ENCODE measurements at regions of chr13 and their contacts with region 1.

Region 1: GRCh38 chr13:53151336-53152056 is 122.9 kb downstream of the OLFM4 start:
- DNase-seq: peak; percentile 60
- H3K4me3 ChIP-seq: no peak overlapping the region
- H3K27ac ChIP-seq: no peak overlapping the region
- H3K4me1 ChIP-seq: no peaks in the 10 kb centered on the region
- H3K27me3 ChIP-seq: no peaks in the 10 kb centered on the region
- CTCF ChIP-seq: peak; percentile 57

Region 2: DNA sequence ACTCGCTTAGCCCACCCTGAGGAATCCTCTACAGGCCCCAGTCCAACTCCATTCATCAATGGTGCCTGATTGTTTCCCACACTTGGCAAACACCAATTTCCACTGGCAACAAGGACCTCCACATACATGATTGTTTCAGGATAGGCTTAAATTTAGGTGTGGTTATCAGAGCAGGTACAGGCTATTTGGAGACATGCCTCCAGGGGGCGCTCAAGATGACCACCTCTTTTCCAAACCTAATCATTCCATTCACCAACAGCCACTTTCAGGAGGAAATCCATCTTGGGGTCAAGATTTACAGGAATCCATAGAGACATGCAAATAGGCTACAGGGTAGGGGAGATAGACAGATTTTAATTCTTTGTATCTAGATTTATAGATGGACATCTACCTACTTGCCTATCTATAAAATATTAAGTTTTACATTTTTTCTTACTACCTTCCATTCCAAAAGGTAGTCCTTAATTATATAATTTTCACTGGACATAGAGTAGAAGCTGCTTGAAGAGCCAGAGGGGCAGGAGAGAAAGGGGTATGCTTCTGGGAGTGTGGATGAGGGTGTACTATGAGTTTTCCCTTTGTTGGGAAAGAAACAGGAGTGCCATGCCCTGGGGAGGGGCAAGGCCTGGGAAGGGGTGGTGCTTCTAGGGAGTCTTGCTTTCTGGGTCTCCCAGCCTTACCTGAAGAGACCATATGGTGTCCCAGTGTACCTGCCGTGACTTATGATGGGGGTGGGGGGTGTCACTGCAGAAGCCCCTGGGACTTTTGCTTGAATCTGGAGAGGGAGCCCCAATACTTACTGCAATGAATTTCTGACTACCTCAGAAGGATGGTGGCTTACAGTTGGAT is 288.9 kb before region 1 on chr13:
- intact Hi-C with region 1: loop called (anchors 10 kb)
- DNase-seq: peak; percentile 40
- H3K4me3 ChIP-seq: no peak overlapping the region
- H3K27ac ChIP-seq: no peak overlapping the region
- H3K4me1 ChIP-seq: no peaks in the 10 kb centered on the region
- H3K27me3 ChIP-seq: no peaks in the 10 kb centered on the region
- CTCF ChIP-seq: peak; percentile 52

Region 3: DNA sequence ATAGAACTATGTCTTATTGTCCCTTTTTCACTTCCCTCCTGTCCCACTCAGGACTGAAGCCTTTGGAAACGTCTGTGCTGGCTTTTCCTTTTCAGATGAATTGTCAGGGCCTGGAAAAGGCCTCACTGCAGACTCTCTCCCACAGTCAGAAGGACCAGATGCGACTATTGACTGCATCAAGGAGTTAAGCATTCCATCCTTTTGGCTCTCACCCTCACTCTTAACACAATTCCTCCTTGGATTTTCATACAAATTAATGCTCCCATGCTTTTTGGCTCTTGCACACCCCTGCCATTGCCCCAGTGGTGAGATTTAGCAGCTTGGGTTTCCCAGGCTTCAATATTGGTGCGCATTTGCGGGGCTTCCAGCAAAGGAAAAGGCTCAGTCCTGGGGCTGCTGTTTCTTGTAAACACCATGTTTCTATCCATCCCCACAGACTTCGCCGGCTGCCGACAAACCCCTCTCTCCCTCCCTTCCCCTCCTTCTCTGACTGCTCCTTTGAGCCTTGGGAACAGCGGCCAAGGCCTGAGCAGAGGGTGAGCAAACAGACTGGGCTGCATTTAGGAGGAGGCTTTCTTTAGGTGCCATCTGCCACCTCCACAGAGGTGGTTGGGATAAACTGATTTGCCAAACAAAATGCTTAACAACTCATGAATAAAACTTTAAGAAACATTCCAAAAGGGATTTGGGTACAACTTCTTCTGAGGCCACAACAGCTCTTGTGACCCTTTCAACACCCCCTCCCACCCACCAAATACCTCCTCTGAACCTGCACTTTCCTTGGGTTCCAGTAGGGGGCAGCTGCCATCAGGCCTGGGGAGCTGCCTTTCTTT is 254.5 kb before region 1 on chr13:
- intact Hi-C with region 1: loop called (anchors 10 kb)
- DNase-seq: peak; percentile 27
- H3K4me3 ChIP-seq: no peak overlapping the region
- H3K27ac ChIP-seq: no peak overlapping the region
- H3K4me1 ChIP-seq: no peaks in the 10 kb centered on the region
- H3K27me3 ChIP-seq: no peaks in the 10 kb centered on the region
- CTCF ChIP-seq: peak; percentile 59

Region 4: DNA sequence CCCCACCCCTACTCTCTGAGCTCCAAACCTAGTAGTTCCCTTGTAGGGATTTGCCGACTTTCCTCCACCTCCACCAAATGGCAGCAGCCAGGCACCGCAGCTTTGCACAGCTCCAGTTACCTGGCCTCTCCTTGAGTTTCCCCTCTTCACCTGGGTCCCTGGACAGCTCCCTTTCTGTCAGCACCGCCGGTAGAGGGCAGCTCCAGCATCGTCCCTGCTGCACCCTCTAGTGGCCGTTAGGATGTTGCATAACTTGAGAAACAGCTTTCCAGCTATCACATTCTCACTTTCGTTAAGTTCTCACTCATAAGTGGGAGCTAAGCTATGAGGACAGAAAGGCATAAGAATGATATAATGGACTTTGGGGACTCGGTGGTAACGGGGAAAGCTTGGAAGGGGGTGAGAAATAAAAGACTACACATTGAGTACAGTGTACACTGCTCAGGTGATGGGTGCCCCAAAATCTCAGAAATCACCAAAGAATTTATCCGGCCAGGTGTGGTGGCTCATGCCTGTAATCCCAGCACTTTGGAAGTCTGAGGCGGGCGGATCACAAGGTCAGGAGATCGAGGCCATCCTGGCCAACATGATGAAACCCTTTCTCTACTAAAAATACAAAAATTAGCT is 183.3 kb before region 1 on chr13:
- intact Hi-C with region 1: loop called (anchors 5 kb)
- DNase-seq: peak; percentile 82
- H3K4me3 ChIP-seq: no peak overlapping the region
- H3K27ac ChIP-seq: no peak overlapping the region
- H3K4me1 ChIP-seq: no peaks in the 10 kb centered on the region
- H3K27me3 ChIP-seq: no peaks in the 10 kb centered on the region
- CTCF ChIP-seq: peak; percentile 89